ENCODE measurements at regions of chr14 and their contacts with region 1.

Region 1: GRCh38 chr14:23320774-23321571 is at the start of gene PABPN1:
- DNase-seq: peak; percentile 91 to 99 (median 98)
- ATAC-seq: peak; percentile 89
- H3K4me3 Mint-ChIP-seq: peak within 1 kb of the TSS; percentile 87 to 96 (median 92)
- H3K27ac Mint-ChIP-seq: peak within 1 kb of the TSS; percentile 97 to 99 (median 99)
- H3K4me1 Mint-ChIP-seq: peaks cover 18 to 32% (median 30%) of the 10 kb centered on the region in 4 donors
- H3K27me3 Mint-ChIP-seq: no peaks in the 10 kb centered on the region
- polyA plus RNA-seq, gene PABPN1: 84.3 to 96.9 (median 88.5) TPM

Region 2: GRCh38 chr14:23286020-23286905 is 34.7 kb before region 1 on chr14 and contains the start of gene HOMEZ:
- POLR2A ChIA-PET with region 1: interaction called, 32 read pairs
- DNase-seq: peak; percentile 91 to 98 (median 96)
- ATAC-seq: peak; percentile 97 to 98
- H3K4me3 Mint-ChIP-seq: peak within 1 kb of the TSS; percentile 90 to 100 (median 98)
- H3K27ac Mint-ChIP-seq: peak within 1 kb of the TSS; percentile 82 to 97 (median 96)
- H3K4me1 Mint-ChIP-seq: peaks cover 6 to 33% (median 32%) of the 10 kb centered on the region in 4 donors
- H3K27me3 Mint-ChIP-seq: no peaks in the 10 kb centered on the region
- polyA plus RNA-seq, gene HOMEZ: 3.9 to 6.1 (median 5.9) TPM

Region 3: DNA sequence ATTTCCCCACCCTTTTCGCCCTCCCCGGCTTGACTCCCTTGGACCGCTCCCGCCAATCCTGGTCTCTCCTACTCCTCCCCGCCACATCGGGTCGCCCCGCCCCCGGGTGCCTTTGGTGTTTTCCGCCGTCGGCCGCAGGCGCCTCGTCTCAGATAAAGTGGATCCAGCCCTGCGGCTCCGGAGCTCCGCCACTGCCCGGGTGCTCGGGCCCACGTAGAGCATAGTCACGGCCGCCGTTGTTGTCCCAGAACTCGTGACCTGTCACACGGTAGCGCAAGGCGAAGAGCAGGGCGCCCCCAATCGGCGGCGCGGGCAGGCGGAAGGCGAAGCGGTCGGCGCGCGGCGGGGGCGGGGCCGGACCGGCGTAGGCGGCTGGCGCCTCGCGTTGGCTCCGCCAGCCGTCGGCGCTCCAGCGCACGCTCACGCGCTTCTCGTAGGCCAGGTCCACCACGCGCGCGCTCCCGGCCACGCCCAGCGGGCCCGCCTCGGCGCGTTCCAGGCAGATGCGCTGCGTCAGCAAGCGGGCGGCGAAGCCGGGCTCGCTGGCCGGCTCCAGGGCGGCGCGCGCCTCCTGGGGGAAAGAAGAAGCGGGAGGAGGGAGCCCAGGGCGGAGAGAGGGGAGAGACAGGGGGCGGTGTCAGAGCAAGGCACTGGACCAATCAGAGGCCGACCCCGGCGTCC is 19.5 kb before region 1 on chr14:
- POLR2A ChIA-PET with region 1: interaction called, 376 read pairs
- DNase-seq: peak; percentile 95 to 99 (median 97)
- ATAC-seq: peak; percentile 68 to 74
- H3K4me3 Mint-ChIP-seq: peak overlapping the region; percentile 86 to 100 (median 94)
- H3K27ac Mint-ChIP-seq: peak overlapping the region; percentile 84 to 99 (median 95)
- H3K4me1 Mint-ChIP-seq: peaks cover 11 to 39% (median 32%) of the 10 kb centered on the region in 4 donors
- H3K27me3 Mint-ChIP-seq: peaks cover 0 to 13% (median 11%) of the 10 kb centered on the region in 5 donors

Region 4: GRCh38 chr14:23366426-23366921 is 45.5 kb after region 1 on chr14:
- POLR2A ChIA-PET with region 1: no interaction called
- DNase-seq: no peak
- ATAC-seq: no peak
- H3K4me3 Mint-ChIP-seq: peak overlapping the region in 1 of 10 donors; percentile 39
- H3K27ac Mint-ChIP-seq: no peak overlapping the region
- H3K4me1 Mint-ChIP-seq: peaks cover 0 to 8% (median 2%) of the 10 kb centered on the region in 4 donors
- H3K27me3 Mint-ChIP-seq: peaks cover 13 to 42% (median 29%) of the 10 kb centered on the region in 5 donors

Region 5: GRCh38 chr14:23469127-23469905 is 148.3 kb after region 1 on chr14 and contains the start of gene NGDN:
- POLR2A ChIA-PET with region 1: interaction called, 14 read pairs
- DNase-seq: peak; percentile 74 to 97 (median 94)
- ATAC-seq: peak; percentile 91 to 92
- H3K4me3 Mint-ChIP-seq: peak within 1 kb of the TSS in 2 of 10 donors; percentile 44 to 66
- H3K27ac Mint-ChIP-seq: peak within 1 kb of the TSS in 3 of 10 donors; percentile 21 to 80 (median 60)
- H3K4me1 Mint-ChIP-seq: peaks cover 2 to 13% (median 8%) of the 10 kb centered on the region in 4 donors
- H3K27me3 Mint-ChIP-seq: no peaks in the 10 kb centered on the region
- polyA plus RNA-seq, gene NGDN: 64.0 to 84.8 (median 68.4) TPM